ENCODE measurements at regions of chr21 and their contacts with region 1.

Region 1: GRCh38 chr21:37700641-37701202 is 215.5 kb downstream of the KCNJ6 start:
- DNase-seq: no peak
- ATAC-seq: peak in 1 of 2 donors; percentile 39
- H3K4me3 ChIP-seq: no peak overlapping the region
- H3K27ac ChIP-seq: no peak overlapping the region
- H3K4me1 ChIP-seq: no peaks in the 10 kb centered on the region
- H3K27me3 ChIP-seq: no peaks in the 10 kb centered on the region
- CTCF ChIP-seq: peak in 4 of 5 experiments; percentile 19 to 33 (median 31)
- POLR2A ChIP-seq: no peak

Region 2: GRCh38 chr21:37821786-37822450 is 121.2 kb after region 1 on chr21:
- in situ Hi-C with region 1: loop called in 1 of 4 experiments (anchors 25 kb)
- intact Hi-C with region 1: no loop called
- DNase-seq: no peak
- ATAC-seq: no peak
- H3K4me3 ChIP-seq: no peak overlapping the region
- H3K27ac ChIP-seq: no peak overlapping the region
- H3K4me1 ChIP-seq: no peaks in the 10 kb centered on the region
- H3K27me3 ChIP-seq: no peaks in the 10 kb centered on the region
- CTCF ChIP-seq: no peak
- POLR2A ChIP-seq: no peak